Dendritic cell treated with granulocyte-macrophage colony-stimulating factor and Interleukin-4, amounts not matched to agents 40 ng/mL and 50 ng/mL, for 4 days (primary cell): ENCODE measurements at regions of chr20 and their contacts with region 1.

Region 1: GRCh38 chr20:23340524-23340923 is 10.1 kb upstream of the NXT1 start:
- H3K4me3 Mint-ChIP-seq: no peak overlapping the region
- H3K27ac Mint-ChIP-seq: no peak overlapping the region
- H3K4me1 Mint-ChIP-seq: no peaks in the 10 kb centered on the region
- H3K27me3 Mint-ChIP-seq: peaks cover 11% of the 10 kb centered on the region

Region 2: DNA sequence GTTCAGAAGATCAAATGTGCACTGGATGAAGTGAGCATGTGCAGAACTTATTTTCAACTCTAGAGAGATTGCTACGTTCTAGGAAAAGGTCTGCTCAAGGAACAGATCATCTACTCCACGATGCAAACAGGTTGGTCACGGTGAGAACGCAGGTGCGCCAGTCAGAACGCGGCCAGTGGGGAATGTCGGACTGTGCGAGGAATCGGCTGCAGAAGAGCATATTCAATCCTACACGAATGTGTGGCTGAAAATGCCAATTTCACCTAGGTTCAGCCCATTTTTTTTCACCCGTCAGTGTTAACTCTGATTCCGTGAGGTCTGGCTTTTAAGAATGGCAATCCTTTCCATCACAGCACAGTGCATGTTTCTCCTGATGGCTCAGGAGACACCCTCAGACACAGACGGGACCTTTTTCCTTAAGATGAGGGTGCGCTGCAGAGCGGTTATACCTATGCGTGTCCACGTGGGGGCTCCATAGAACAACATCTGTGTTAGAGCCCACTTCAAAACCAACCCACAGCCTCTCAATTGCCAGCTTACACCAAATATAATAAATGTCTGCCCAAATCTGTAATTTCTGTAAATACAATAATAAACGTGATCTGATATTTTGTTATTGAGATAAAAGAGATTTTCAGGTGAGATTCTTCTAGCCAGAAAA is 1006.5 kb before region 1 on chr20:
- intact Hi-C with region 1: loop called (anchors 2 kb)
- H3K4me3 Mint-ChIP-seq: no peak overlapping the region
- H3K27ac Mint-ChIP-seq: no peak overlapping the region
- H3K4me1 Mint-ChIP-seq: peaks cover 5% of the 10 kb centered on the region
- H3K27me3 Mint-ChIP-seq: peaks cover 30% of the 10 kb centered on the region

Region 3: DNA sequence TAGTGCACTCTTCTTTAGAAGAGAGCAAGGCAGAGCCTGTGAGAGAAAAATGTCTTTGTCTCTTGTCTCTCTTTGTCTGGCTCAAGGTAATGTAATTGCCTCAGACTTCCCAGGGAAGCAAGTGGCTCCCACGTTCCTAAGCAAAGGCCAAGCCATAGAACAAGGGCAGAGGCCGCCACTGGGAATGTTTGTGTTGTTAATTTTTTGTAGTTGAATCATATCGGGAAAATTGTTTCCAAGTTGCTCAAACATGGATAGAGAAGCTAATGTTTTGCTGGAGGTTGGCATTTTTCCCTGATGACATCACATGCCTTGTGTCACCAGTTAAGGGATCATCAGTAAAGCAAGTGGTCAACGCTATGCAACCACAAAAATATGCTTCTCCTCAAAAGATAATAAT is 544.7 kb before region 1 on chr20:
- intact Hi-C with region 1: no loop called
- H3K4me3 Mint-ChIP-seq: no peak overlapping the region
- H3K27ac Mint-ChIP-seq: no peak overlapping the region
- H3K4me1 Mint-ChIP-seq: peaks cover 8% of the 10 kb centered on the region
- H3K27me3 Mint-ChIP-seq: peaks cover 3% of the 10 kb centered on the region

Region 4: GRCh38 chr20:23235173-23236027 is 105.1 kb before region 1 on chr20:
- intact Hi-C with region 1: loop called (anchors 5 kb)
- H3K4me3 Mint-ChIP-seq: no peak overlapping the region
- H3K27ac Mint-ChIP-seq: no peak overlapping the region
- H3K4me1 Mint-ChIP-seq: peaks cover 36% of the 10 kb centered on the region
- H3K27me3 Mint-ChIP-seq: peaks cover 25% of the 10 kb centered on the region